Sigmoid colon (tissue), 7 donors: ENCODE measurements at regions of chr19 and their contacts with region 1.

Region 1: GRCh38 chr19:12881172-12881808 is at the start of gene DNASE2:
- DNase-seq: peak; percentile 99
- H3K4me3 ChIP-seq: peak within 1 kb of the TSS; percentile 50 to 88 (median 80)
- H3K27ac ChIP-seq: peak within 1 kb of the TSS; percentile 89 to 97 (median 94)
- H3K4me1 ChIP-seq: peaks cover 0 to 36% (median 31%) of the 10 kb centered on the region in 4 donors
- H3K27me3 ChIP-seq: peaks cover 5 to 21% (median 15%) of the 10 kb centered on the region in 3 donors
- CTCF ChIP-seq: no peak
- EP300 ChIP-seq: peak in 2 of 4 donors; percentile 21 to 75
- POLR2A ChIP-seq: peak; percentile 58 to 66
- total RNA-seq, gene DNASE2: 28.6 to 45.1 (median 32.1) TPM

Region 2: GRCh38 chr19:12945479-12946091 is 64.3 kb after region 1 on chr19 and contains the start of gene RAD23A:
- intact Hi-C with region 1: loop called (anchors 5 kb)
- DNase-seq: peak; percentile 99
- H3K4me3 ChIP-seq: peak within 1 kb of the TSS; percentile 88 to 100 (median 93)
- H3K27ac ChIP-seq: peak within 1 kb of the TSS; percentile 93 to 99 (median 96)
- H3K4me1 ChIP-seq: peaks cover 0 to 52% (median 27%) of the 10 kb centered on the region in 4 donors
- H3K27me3 ChIP-seq: no peaks in the 10 kb centered on the region
- CTCF ChIP-seq: no peak
- EP300 ChIP-seq: peak in 1 of 4 donors; percentile 62
- POLR2A ChIP-seq: peak; percentile 79 to 87
- total RNA-seq, gene RAD23A: 98.8 to 133 (median 117) TPM

Region 3: GRCh38 chr19:12965017-12965811 is 83.9 kb after region 1 on chr19:
- intact Hi-C with region 1: loop called (anchors 1 kb)
- DNase-seq: peak; percentile 88
- H3K4me3 ChIP-seq: peak overlapping the region; percentile 32 to 56 (median 47)
- H3K27ac ChIP-seq: peak overlapping the region; percentile 69 to 82 (median 73)
- H3K4me1 ChIP-seq: peaks cover 0 to 17% (median 11%) of the 10 kb centered on the region in 4 donors
- H3K27me3 ChIP-seq: no peaks in the 10 kb centered on the region
- CTCF ChIP-seq: peak; percentile 89 to 96 (median 96)
- EP300 ChIP-seq: no peak
- POLR2A ChIP-seq: no peak

Region 4: DNA sequence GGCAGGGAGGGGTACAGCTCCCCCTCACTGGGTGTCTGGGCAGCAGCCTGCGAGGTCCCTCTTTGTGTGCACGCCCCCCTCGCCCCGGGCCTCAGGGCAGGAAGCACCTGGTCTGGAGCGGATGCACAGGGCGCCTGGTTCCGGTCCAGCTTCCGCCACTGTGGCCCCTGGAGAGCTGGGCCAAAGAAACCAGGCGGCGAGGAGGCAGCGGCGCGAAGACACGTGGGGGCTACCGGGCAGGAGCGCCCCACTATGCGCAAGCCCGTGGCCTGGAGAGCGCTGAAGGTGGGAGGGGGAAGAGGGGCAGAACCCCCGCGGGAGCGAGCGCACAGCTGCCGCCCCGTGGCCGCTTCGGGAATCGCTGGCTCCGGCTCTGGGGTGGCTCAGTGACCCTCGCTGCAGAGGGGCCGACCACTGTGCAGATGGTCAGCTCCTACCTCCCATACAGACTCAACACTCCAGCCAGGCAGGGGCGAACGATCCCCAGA is 223.1 kb after region 1 on chr19:
- intact Hi-C with region 1: loop called (anchors 10 kb)
- DNase-seq: peak; percentile 86
- H3K4me3 ChIP-seq: peak overlapping the region in 3 of 4 donors; percentile 7 to 29 (median 17)
- H3K27ac ChIP-seq: peak overlapping the region; percentile 74 to 95 (median 86)
- H3K4me1 ChIP-seq: peaks cover 0 to 40% (median 31%) of the 10 kb centered on the region in 4 donors
- H3K27me3 ChIP-seq: no peaks in the 10 kb centered on the region
- CTCF ChIP-seq: peak; percentile 62 to 84 (median 76)
- EP300 ChIP-seq: peak in 1 of 4 donors; percentile 47
- POLR2A ChIP-seq: no peak